SK-N-SH (cell line): ENCODE measurements at regions of chr17 and their contacts with region 1.

Region 1: DNA sequence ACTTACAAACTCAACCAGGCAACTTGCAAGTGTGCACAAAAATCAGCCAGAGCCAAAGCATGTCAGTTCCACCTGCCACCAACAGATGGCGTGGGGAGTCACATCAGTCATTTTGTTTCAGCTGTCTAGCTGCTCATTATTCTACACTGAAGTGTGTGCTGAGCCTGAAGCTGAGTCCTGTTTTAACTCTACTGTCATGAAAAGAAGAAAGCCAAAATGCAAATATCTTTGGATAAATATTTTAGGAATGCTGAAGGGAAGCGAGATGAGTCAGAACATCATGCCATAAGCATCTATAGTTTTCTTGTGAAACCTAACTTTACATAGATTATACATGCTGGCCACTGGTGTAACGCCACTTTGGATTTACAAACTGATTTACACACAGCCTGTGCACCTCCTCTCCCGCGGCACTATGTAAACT is 172.6 kb downstream of the CDK5R1 start:
- DNase-seq: peak; percentile 70
- H3K4me3 ChIP-seq: no peak overlapping the region; a peak in 1 of 4 replicates
- H3K27ac ChIP-seq: no peak overlapping the region
- H3K4me1 ChIP-seq: peaks cover 0 to 4% of the 10 kb centered on the region in 2 experiments; a peak in 1 of 4 replicates
- H3K27me3 ChIP-seq: no peaks in the 10 kb centered on the region
- CTCF ChIP-seq: peak; percentile 90
- EP300 ChIP-seq: no peak
- RAD21 ChIP-seq: peak; percentile 73

Region 2: GRCh38 chr17:32486111-32486700 is 173.2 kb before region 1 on chr17:
- CTCF ChIA-PET with region 1: interaction called, 16 read pairs
- POLR2A ChIA-PET with region 1: interaction called, 3 read pairs
- DNase-seq: peak; percentile 96
- H3K4me3 ChIP-seq: peak overlapping the region in 1 of 2 experiments; percentile 76; a peak in 3 of 4 replicates
- H3K27ac ChIP-seq: peak overlapping the region in 1 of 2 experiments; percentile 88; a peak in 2 of 4 replicates
- H3K4me1 ChIP-seq: peaks cover 0 to 51% of the 10 kb centered on the region in 2 experiments; a peak in 2 of 4 replicates
- H3K27me3 ChIP-seq: no peaks in the 10 kb centered on the region
- CTCF ChIP-seq: no peak
- EP300 ChIP-seq: no peak
- RAD21 ChIP-seq: no peak

Region 3: GRCh38 chr17:32648450-32648849 is 11.0 kb before region 1 on chr17:
- CTCF ChIA-PET with region 1: interaction called, 35 read pairs
- POLR2A ChIA-PET with region 1: no interaction called
- DNase-seq: no peak
- H3K4me3 ChIP-seq: no peak overlapping the region
- H3K27ac ChIP-seq: no peak overlapping the region
- H3K4me1 ChIP-seq: no peaks in the 10 kb centered on the region
- H3K27me3 ChIP-seq: no peaks in the 10 kb centered on the region
- CTCF ChIP-seq: no peak
- EP300 ChIP-seq: no peak
- RAD21 ChIP-seq: no peak

Region 4: DNA sequence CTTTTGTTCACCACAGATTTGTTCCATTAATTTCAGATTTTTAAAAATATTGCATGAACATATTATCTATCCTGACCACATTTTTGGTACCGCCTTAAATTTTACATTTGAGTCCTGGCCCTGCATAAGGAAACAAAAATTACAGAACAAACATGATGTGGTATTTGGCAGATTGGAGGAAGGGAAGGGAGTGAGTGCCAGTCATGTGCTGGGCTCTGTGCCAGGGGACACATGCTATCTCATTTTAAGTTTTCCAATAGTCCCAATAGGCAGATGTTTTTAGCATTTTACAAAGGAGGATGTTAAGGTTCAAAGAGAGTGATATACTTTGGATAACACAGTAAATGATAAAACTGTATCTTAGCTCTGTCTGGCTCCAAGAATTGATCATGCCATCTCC is 12.5 kb after region 1 on chr17:
- CTCF ChIA-PET with region 1: interaction called, 20 read pairs
- POLR2A ChIA-PET with region 1: no interaction called
- DNase-seq: no peak
- H3K4me3 ChIP-seq: no peak overlapping the region
- H3K27ac ChIP-seq: no peak overlapping the region
- H3K4me1 ChIP-seq: peaks cover 0 to 9% of the 10 kb centered on the region in 2 experiments; a peak in 2 of 4 replicates
- H3K27me3 ChIP-seq: no peaks in the 10 kb centered on the region
- CTCF ChIP-seq: no peak
- EP300 ChIP-seq: no peak
- RAD21 ChIP-seq: no peak

Region 5: GRCh38 chr17:32746698-32747097 is 87.3 kb after region 1 on chr17:
- CTCF ChIA-PET with region 1: interaction called, 21 read pairs
- POLR2A ChIA-PET with region 1: no interaction called
- DNase-seq: no peak
- H3K4me3 ChIP-seq: no peak overlapping the region
- H3K27ac ChIP-seq: no peak overlapping the region
- H3K4me1 ChIP-seq: no peaks in the 10 kb centered on the region; a peak in 1 of 4 replicates
- H3K27me3 ChIP-seq: no peaks in the 10 kb centered on the region
- CTCF ChIP-seq: no peak
- EP300 ChIP-seq: no peak
- RAD21 ChIP-seq: no peak

Region 6: DNA sequence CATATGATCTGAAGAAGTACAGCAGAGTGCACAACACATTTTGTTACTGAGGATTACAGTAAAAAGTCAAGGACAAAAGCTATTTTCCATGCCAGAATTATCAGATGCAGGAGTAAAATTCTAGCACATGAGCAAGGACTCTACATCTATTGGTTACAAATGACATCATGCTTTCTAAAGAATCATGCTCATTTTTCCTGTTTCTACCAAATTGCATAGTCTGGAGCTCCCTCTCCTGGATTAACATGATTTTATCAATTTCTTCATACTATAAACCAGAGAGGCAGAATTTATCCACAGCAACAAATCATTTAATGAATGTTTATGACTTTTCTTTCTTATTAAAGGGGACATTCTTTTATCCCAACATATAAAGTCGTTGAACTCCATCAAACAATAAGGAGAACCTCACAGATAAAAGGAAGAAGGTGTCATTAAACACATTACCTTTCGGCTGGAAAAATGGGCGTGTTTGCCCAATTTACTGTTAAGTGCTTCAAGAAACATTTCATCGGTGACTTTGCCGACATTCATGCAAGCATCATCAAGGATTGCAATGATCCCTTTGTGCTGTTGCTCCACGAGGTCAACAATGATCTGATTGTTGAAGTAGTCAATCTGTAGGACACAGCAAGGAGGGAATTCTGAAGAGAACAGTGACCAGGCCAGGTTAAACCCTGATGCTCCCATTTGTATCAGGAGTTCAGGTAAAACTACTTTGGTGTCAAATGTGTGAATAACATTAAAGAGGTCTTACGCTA is 95.8 kb after region 1 on chr17:
- CTCF ChIA-PET with region 1: interaction called, 21 read pairs
- POLR2A ChIA-PET with region 1: no interaction called
- DNase-seq: peak; percentile 66
- H3K4me3 ChIP-seq: no peak overlapping the region
- H3K27ac ChIP-seq: no peak overlapping the region
- H3K4me1 ChIP-seq: no peaks in the 10 kb centered on the region; a peak in 1 of 4 replicates
- H3K27me3 ChIP-seq: no peaks in the 10 kb centered on the region
- CTCF ChIP-seq: peak; percentile 75
- EP300 ChIP-seq: no peak
- RAD21 ChIP-seq: peak; percentile 95